ENCODE measurements at regions of chrX and their contacts with region 1.

Region 1: GRCh38 chrX:65985922-65986588 is 53.8 kb downstream of the VSIG4 start:
- DNase-seq: peak; percentile 25 to 50
- ATAC-seq: peak; percentile 91 to 98
- H3K4me3 ChIP-seq: no peak overlapping the region
- H3K27ac ChIP-seq: no peak overlapping the region
- H3K4me1 ChIP-seq: no peaks in the 10 kb centered on the region
- CTCF ChIP-seq: peak; percentile 55
- EP300 ChIP-seq: no peak
- POLR2A ChIP-seq: no peak
- RAD21 ChIP-seq: peak; percentile 74 to 75

Region 2: DNA sequence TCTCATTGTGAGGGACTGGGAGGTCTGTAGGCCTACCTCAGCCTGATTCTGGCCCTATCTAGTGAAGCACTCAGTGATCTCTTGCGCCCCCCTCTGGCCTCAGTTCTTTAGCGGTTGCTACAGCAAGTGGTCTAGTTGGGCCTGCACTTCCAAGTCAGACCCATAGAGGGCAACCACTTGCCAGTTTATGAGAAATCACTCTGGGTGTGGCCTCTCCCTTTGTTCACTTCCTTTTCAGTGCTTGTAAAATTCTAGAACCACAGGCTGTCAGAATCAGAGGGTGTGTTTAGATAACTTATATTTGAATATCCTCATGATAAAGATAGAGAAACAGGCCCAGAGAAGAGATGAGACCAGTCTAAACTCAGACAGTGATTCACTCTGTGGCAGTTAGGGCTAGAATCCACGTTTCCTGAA is 390.6 kb before region 1 on chrX:
- CTCF ChIA-PET with region 1: interaction called, 11 read pairs
- POLR2A ChIA-PET with region 1: no interaction called
- DNase-seq: peak; percentile 74 to 92
- ATAC-seq: peak; percentile 93 to 97
- H3K4me3 ChIP-seq: no peak overlapping the region
- H3K27ac ChIP-seq: peak overlapping the region; percentile 69 to 86
- H3K4me1 ChIP-seq: peaks cover 13% of the 10 kb centered on the region
- CTCF ChIP-seq: peak; percentile 94
- EP300 ChIP-seq: no peak
- POLR2A ChIP-seq: no peak
- RAD21 ChIP-seq: peak; percentile 89 to 93

Measured in A549 (cell line).